SK-N-SH (cell line): ENCODE measurements at regions of chr5 and their contacts with region 1.

Region 1: DNA sequence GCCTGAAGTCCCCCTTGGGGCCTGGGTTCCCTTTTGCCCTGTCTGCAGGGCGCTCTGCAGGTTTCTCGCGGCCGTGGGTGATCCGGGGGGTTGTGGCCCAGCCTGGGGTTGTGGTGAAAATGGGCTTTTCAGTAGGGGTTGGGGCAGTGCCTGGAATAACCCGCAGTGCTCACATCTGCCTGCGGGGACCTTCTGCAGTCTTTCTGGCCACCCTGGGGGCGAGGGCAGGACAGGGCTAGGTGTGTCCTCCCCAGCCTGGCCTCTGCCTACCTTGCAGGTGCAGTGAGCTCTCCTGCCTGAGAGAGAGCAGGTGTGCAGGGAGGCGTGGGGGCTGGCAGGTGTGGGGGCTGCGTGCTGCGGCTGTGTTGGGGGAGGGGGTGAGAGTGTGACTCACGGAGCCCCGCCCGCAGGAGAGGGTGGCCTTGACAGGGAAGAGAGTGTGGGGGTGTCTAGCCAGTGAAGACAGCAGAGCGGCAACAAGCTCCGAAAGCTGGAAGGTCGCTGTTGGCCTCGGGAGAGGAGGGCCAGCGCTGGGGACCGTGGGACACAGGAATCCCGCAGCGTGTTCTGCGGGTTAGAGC is 131.4 kb downstream of the MRPL36 start:
- DNase-seq: peak; percentile 15
- H3K4me3 ChIP-seq: no peak overlapping the region
- H3K27ac ChIP-seq: no peak overlapping the region
- H3K4me1 ChIP-seq: no peaks in the 10 kb centered on the region
- H3K27me3 ChIP-seq: peaks cover 83% of the 10 kb centered on the region
- CTCF ChIP-seq: no peak
- EP300 ChIP-seq: no peak
- RAD21 ChIP-seq: no peak

Region 2: GRCh38 chr5:1652596-1653345 is 15.5 kb before region 1 on chr5:
- CTCF ChIA-PET with region 1: interaction called, 14 read pairs
- POLR2A ChIA-PET with region 1: no interaction called
- DNase-seq: no peak
- H3K4me3 ChIP-seq: no peak overlapping the region
- H3K27ac ChIP-seq: no peak overlapping the region
- H3K4me1 ChIP-seq: no peaks in the 10 kb centered on the region; a peak in 1 of 4 replicates
- H3K27me3 ChIP-seq: peaks cover 67% of the 10 kb centered on the region
- CTCF ChIP-seq: no peak
- EP300 ChIP-seq: no peak
- RAD21 ChIP-seq: no peak

Region 3: GRCh38 chr5:2048664-2049063 is 380.4 kb after region 1 on chr5:
- CTCF ChIA-PET with region 1: no interaction called
- POLR2A ChIA-PET with region 1: no interaction called
- DNase-seq: no peak
- H3K4me3 ChIP-seq: no peak overlapping the region
- H3K27ac ChIP-seq: no peak overlapping the region
- H3K4me1 ChIP-seq: no peaks in the 10 kb centered on the region
- H3K27me3 ChIP-seq: peaks cover 12% of the 10 kb centered on the region; the same call in 1 of the 2 replicates
- CTCF ChIP-seq: no peak
- EP300 ChIP-seq: no peak
- RAD21 ChIP-seq: no peak